Upper lobe of right lung (tissue), 1 donor: ENCODE measurements at regions of chr1 and their contacts with region 1.

Region 1: GRCh38 chr1:94854458-94855306 is 34.5 kb downstream of the SLC44A3 start:
- DNase-seq: peak; percentile 90
- ATAC-seq: peak; percentile 97
- H3K4me3 ChIP-seq: peak overlapping the region; percentile 43
- H3K27ac ChIP-seq: peak overlapping the region; percentile 65
- H3K4me1 ChIP-seq: peaks cover 8% of the 10 kb centered on the region
- H3K27me3 ChIP-seq: no peaks in the 10 kb centered on the region
- CTCF ChIP-seq: peak; percentile 91

Region 2: GRCh38 chr1:94926915-94927404 is 72.3 kb after region 1 on chr1 and contains the start of gene CNN3:
- intact Hi-C with region 1: loop called (anchors 10 kb)
- DNase-seq: peak; percentile 97
- ATAC-seq: peak; percentile 95
- H3K4me3 ChIP-seq: peak within 1 kb of the TSS; percentile 73
- H3K27ac ChIP-seq: peak within 1 kb of the TSS; percentile 96
- H3K4me1 ChIP-seq: peaks cover 38% of the 10 kb centered on the region
- H3K27me3 ChIP-seq: no peaks in the 10 kb centered on the region
- CTCF ChIP-seq: no peak
- total RNA-seq, gene CNN3: 215 TPM

Region 3: DNA sequence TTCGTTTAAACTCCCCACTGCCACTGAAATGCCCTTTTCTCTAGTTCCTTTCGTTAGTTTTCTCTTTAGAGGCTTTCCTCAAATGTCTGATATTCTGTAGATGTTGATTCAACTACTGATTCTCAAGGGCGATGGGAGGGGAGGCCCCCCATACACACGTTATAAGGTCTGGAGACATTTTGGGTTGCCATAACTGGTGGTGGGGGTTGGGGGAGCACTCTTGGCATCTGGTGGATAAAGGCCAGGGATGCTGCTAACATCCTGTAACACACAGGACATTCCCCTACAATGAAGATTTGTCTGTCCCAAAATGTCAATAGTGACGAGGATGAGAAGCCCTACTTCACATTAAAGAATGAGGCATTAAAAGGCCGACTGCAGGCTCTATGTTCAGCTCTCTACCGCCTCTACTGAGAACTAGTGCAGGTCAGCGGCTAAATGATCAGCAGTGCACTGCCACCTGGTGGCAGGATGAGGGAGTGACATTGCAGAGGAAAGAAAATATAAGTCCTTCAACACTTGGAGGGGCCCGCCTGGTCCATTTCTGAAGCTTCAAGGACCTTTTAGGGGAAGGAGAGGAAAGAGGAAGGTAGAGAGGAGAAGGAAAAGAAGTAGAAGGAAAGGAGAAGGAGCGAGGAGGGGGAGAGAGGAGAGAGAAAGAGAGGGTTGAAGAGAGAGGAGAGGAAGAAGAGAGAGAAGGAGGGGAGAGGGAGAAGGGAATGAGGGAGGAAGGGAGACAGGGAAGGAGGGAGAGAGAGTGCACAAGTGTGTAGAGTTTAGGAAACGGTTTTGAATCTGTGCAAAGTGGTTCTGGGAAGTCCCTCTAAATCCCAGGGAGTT is 188.7 kb after region 1 on chr1:
- intact Hi-C with region 1: loop called (anchors 5 kb)
- DNase-seq: peak; percentile 83
- ATAC-seq: peak; percentile 99
- H3K4me3 ChIP-seq: no peak overlapping the region
- H3K27ac ChIP-seq: no peak overlapping the region
- H3K4me1 ChIP-seq: peaks cover 17% of the 10 kb centered on the region
- H3K27me3 ChIP-seq: no peaks in the 10 kb centered on the region
- CTCF ChIP-seq: peak; percentile 99